MCF 10A (cell line): ENCODE measurements at regions of chr4 and their contacts with region 1.

Region 1: GRCh38 chr4:142405021-142405694 is 440.9 kb downstream of the INPP4B start:
- DNase-seq: peak; percentile 86
- H3K4me3 Mint-ChIP-seq: peak overlapping the region; percentile 80
- H3K27ac Mint-ChIP-seq: peak overlapping the region; percentile 84
- H3K4me1 Mint-ChIP-seq: peaks cover 49% of the 10 kb centered on the region
- H3K27me3 Mint-ChIP-seq: no peaks in the 10 kb centered on the region
- CTCF ChIP-seq: no peak

Region 2: GRCh38 chr4:142372530-142373260 is 32.5 kb before region 1 on chr4:
- CTCF ChIA-PET with region 1: interaction called, 7 read pairs
- POLR2A ChIA-PET with region 1: interaction called, 18 read pairs
- intact Hi-C with region 1: loop called (anchors 5 kb)
- DNase-seq: no peak
- H3K4me3 Mint-ChIP-seq: no peak overlapping the region
- H3K27ac Mint-ChIP-seq: peak overlapping the region; percentile 61
- H3K4me1 Mint-ChIP-seq: peaks cover 37% of the 10 kb centered on the region
- H3K27me3 Mint-ChIP-seq: no peaks in the 10 kb centered on the region
- CTCF ChIP-seq: no peak

Region 3: DNA sequence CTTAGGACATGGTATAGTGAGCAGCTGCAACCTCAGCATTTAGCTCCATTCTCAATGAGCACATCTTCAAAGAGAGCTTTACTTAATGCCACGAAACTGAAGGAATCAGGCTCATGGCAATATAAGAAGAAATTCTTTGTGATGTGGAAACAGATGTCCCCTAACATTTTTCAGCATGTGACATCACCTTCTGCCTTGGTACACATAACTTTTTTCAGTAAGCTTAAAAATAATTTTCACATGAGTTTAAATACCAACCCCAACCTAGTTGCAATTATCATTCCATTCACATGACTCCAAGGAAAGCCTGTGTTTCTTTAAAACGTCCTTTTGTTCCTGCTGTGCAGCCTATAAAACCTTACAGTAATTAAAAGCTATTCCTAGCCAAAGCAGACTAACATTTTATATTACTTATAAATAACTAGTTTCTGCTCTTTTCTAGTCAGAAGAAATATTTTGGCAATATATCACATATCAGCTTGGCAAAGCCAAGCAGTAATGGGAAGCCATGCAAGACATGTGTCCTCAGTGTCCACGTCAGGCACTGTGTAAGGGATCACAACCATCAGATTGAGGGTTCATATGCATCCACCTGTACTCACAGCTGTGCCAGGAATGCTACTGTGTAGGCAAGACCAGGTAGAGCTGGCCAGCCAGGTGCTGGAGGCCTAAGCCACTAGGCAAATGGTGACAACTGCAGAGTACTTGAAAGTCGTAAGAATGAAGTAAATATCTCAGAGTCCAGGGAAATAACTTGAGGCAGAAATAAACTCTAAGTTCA is 25.7 kb before region 1 on chr4:
- CTCF ChIA-PET with region 1: interaction called, 4 read pairs
- POLR2A ChIA-PET with region 1: interaction called, 48 read pairs
- intact Hi-C with region 1: loop called (anchors 2 kb)
- DNase-seq: peak; percentile 50
- H3K4me3 Mint-ChIP-seq: peak overlapping the region; percentile 19
- H3K27ac Mint-ChIP-seq: peak overlapping the region; percentile 44
- H3K4me1 Mint-ChIP-seq: peaks cover 41% of the 10 kb centered on the region
- H3K27me3 Mint-ChIP-seq: no peaks in the 10 kb centered on the region
- CTCF ChIP-seq: no peak

Region 4: GRCh38 chr4:142386449-142386848 is 18.7 kb before region 1 on chr4:
- CTCF ChIA-PET with region 1: no interaction called
- POLR2A ChIA-PET with region 1: interaction called, 48 read pairs
- intact Hi-C with region 1: loop called (anchors 2 kb)
- DNase-seq: no peak
- H3K4me3 Mint-ChIP-seq: no peak overlapping the region
- H3K27ac Mint-ChIP-seq: no peak overlapping the region
- H3K4me1 Mint-ChIP-seq: peaks cover 14% of the 10 kb centered on the region
- H3K27me3 Mint-ChIP-seq: no peaks in the 10 kb centered on the region
- CTCF ChIP-seq: no peak

Region 5: GRCh38 chr4:142719854-142720541 is 314.8 kb after region 1 on chr4:
- CTCF ChIA-PET with region 1: no interaction called
- POLR2A ChIA-PET with region 1: no interaction called
- intact Hi-C with region 1: loop called (anchors 1 kb)
- DNase-seq: peak; percentile 58
- H3K4me3 Mint-ChIP-seq: no peak overlapping the region
- H3K27ac Mint-ChIP-seq: no peak overlapping the region
- H3K4me1 Mint-ChIP-seq: peaks cover 17% of the 10 kb centered on the region
- H3K27me3 Mint-ChIP-seq: no peaks in the 10 kb centered on the region
- CTCF ChIP-seq: peak; percentile 50

Region 6: DNA sequence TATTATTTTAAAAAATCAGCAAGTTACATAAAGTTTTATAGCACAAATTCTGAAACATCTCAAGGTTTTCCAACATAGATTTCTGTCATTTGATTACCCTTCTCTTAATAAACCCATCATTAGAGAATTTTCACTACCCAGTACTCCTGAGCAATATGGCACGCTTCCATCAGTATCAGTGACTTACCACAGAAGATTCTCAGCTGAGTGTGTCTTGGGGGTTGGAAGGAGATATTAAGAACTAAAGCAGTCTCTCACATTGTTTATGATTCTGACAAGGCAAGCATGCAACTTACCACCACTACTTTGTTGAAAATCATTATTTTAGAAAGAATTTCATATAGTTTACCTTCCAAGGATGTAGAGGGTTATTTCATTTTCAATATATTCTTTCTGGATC is 373.3 kb after region 1 on chr4:
- CTCF ChIA-PET with region 1: no interaction called
- POLR2A ChIA-PET with region 1: interaction called, 16 read pairs
- intact Hi-C with region 1: no loop called
- DNase-seq: peak; percentile 10
- H3K4me3 Mint-ChIP-seq: no peak overlapping the region
- H3K27ac Mint-ChIP-seq: peak overlapping the region; percentile 77
- H3K4me1 Mint-ChIP-seq: peaks cover 30% of the 10 kb centered on the region
- H3K27me3 Mint-ChIP-seq: no peaks in the 10 kb centered on the region
- CTCF ChIP-seq: no peak

Region 7: GRCh38 chr4:142840516-142841123 is 435.5 kb after region 1 on chr4:
- CTCF ChIA-PET with region 1: no interaction called
- POLR2A ChIA-PET with region 1: interaction called, 3 read pairs
- intact Hi-C with region 1: loop called (anchors 1 kb)
- DNase-seq: peak; percentile 51
- H3K4me3 Mint-ChIP-seq: no peak overlapping the region
- H3K27ac Mint-ChIP-seq: no peak overlapping the region
- H3K4me1 Mint-ChIP-seq: peaks cover 6% of the 10 kb centered on the region
- H3K27me3 Mint-ChIP-seq: no peaks in the 10 kb centered on the region
- CTCF ChIP-seq: peak; percentile 44